B cell (primary cell): ENCODE measurements at regions of chr2 and their contacts with region 1.

Region 1: DNA sequence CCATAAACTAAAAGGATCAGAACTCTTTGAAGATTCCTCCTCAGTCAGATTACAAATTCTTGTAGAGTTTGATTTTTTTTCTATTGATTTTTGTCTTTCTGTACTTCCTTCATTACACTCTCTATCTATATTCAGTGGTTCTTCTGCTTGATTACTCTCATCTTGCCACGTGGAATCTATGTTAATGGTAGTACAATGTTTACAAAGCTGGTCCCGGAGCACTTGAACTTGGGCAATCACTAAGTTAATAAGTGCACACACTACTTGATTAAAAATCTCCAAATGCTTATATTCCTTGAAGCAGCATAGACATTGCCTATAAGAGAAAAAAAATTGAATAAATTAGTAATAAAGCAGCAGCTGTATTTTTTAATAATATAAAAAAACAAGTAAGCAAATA is 65.1 kb downstream of the USP34 start:
- DNase-seq: no peak
- ATAC-seq: no peak
- H3K4me3 ChIP-seq: no peak overlapping the region
- H3K4me3 Mint-ChIP-seq: no peak overlapping the region
- H3K27ac ChIP-seq: no peak overlapping the region
- H3K27ac Mint-ChIP-seq: no peak overlapping the region
- H3K4me1 ChIP-seq: no peaks in the 10 kb centered on the region
- H3K4me1 Mint-ChIP-seq: peaks cover 5% of the 10 kb centered on the region
- H3K27me3 ChIP-seq: no peaks in the 10 kb centered on the region
- H3K27me3 Mint-ChIP-seq: no peaks in the 10 kb centered on the region
- CTCF ChIP-seq: no peak

Region 2: DNA sequence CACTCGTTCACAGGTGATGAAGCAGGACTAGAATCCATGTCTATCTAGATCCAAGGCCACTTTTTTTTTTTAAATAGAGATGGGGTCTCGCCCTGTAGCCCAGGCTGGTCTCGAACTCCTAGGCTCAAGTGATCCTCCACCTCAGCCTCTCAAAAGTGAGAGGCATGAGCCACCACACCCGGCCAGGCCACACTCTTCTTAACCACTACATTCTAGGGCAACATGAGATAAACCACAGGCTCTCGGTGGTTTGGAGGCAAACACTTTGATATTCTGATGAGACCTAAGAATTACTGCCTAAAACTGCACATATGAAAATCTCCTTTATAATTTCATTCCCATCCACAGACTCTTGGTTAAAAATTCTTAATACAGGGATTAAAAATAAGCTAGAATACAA is 13.3 kb after region 1 on chr2:
- CTCF ChIA-PET with region 1: interaction called, 5 read pairs
- POLR2A ChIA-PET with region 1: no interaction called
- intact Hi-C with region 1: loop called (anchors 2 kb)
- DNase-seq: no peak
- ATAC-seq: no peak
- H3K4me3 ChIP-seq: no peak overlapping the region
- H3K4me3 Mint-ChIP-seq: no peak overlapping the region
- H3K27ac ChIP-seq: peak overlapping the region in 1 of 2 donors; percentile 10
- H3K27ac Mint-ChIP-seq: no peak overlapping the region
- H3K4me1 ChIP-seq: peaks cover 35 to 46% of the 10 kb centered on the region in 2 donors
- H3K4me1 Mint-ChIP-seq: peaks cover 61% of the 10 kb centered on the region
- H3K27me3 ChIP-seq: no peaks in the 10 kb centered on the region
- H3K27me3 Mint-ChIP-seq: no peaks in the 10 kb centered on the region
- CTCF ChIP-seq: no peak